Activated B cell treated with CpG ODN at 0.5 μM for 24 hours (primary cell): ENCODE measurements at regions of chr2 and their contacts with region 1.

Region 1: GRCh38 chr2:127778850-127779249 is 32.1 kb downstream of the WDR33 start:
- DNase-seq: no peak
- ATAC-seq: no peak
- H3K4me3 Mint-ChIP-seq: no peak overlapping the region
- H3K27ac Mint-ChIP-seq: no peak overlapping the region
- H3K4me1 Mint-ChIP-seq: peaks cover 45% of the 10 kb centered on the region
- H3K27me3 Mint-ChIP-seq: no peaks in the 10 kb centered on the region
- CTCF ChIP-seq: no peak

Region 2: DNA sequence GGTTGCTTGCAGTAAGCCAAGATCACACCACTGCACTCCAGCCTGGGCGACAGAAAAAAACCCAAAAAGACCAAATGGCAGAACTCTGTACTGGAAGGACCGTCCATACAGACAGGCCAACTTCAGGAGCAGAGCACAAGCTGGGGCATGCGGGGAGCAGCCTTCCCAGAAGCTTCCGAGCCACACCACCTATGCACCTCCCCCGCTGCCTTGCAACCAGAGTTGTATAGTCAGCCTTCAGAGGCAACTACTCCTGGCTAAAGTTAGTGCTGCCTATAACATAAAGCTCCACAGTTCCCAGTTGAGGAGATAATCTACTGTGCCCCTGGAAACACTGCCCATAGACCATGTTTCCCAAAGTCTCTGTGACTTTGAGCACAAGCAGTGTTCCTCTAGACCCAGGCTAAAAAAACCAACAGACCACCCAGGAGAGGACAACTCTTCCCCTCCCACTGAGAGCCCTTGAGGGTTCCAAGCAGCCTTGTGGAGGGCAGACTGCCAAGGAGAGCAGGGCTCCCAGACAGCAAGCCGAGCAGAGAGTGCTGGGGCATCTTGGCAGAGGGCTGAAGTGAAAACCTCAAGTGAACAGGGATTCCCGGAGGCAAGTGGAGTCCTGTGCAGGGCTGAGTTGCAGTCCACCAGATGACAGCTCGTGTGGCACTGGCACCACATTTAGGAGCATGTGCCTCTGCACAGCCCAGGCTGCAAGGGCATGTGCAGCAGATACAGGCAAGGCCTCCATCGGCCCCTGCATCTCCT is 70.8 kb before region 1 on chr2:
- CTCF ChIA-PET with region 1: no interaction called
- POLR2A ChIA-PET with region 1: no interaction called
- intact Hi-C with region 1: no loop called
- DNase-seq: no peak
- ATAC-seq: no peak
- H3K4me3 Mint-ChIP-seq: no peak overlapping the region
- H3K27ac Mint-ChIP-seq: no peak overlapping the region
- H3K4me1 Mint-ChIP-seq: peaks cover 21% of the 10 kb centered on the region
- H3K27me3 Mint-ChIP-seq: no peaks in the 10 kb centered on the region
- CTCF ChIP-seq: no peak

Region 3: DNA sequence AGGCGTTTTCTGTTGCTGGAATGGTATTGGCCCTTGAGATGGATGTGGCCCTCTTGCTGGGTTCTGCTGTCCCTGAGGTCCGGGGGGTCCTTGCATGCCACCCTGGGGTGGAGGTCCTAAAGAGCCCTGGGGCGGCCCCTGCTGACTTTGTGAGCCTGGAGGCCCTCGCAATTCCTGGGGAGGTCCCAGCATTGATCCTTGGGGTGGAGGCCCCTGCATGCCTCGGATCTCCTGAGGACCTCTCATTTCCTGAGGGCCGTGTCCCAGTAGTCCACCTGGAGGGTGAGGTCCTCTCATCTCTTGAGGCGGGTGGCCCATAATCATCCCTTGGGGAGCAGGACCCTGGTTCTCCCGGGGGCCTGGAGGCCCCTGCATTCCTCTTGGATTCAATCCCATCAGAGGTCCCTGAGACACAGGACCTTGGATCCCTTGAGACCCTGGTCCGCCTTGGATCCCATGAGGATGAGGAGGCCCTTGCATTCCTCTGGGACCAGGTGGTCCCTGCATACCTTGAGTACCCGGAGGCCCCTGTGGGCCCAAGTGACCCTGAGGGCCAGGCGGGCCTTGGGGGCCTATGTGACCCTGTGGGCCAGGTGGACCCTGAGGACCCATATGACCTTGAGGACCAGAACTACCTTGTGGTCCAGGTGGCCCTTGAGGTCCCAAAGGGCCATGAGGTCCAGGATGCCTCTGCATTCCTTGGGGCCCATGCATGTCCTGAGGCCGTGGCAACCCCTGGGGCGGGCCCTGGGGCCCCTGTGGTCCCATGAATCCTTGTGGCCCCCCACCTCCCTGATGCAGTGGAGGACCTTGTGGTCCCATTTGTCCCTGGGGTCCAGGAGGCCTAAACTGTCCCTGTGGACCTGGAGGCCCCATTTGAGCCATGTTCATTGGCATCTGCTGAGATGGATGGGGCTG is 59.3 kb before region 1 on chr2:
- CTCF ChIA-PET with region 1: no interaction called
- POLR2A ChIA-PET with region 1: interaction called, 11 read pairs
- intact Hi-C with region 1: no loop called
- DNase-seq: no peak
- ATAC-seq: no peak
- H3K4me3 Mint-ChIP-seq: no peak overlapping the region
- H3K27ac Mint-ChIP-seq: no peak overlapping the region
- H3K4me1 Mint-ChIP-seq: no peaks in the 10 kb centered on the region
- H3K27me3 Mint-ChIP-seq: no peaks in the 10 kb centered on the region
- CTCF ChIP-seq: no peak